H1 (cell line): ENCODE measurements at regions of chr19 and their contacts with region 1.

Region 1: DNA sequence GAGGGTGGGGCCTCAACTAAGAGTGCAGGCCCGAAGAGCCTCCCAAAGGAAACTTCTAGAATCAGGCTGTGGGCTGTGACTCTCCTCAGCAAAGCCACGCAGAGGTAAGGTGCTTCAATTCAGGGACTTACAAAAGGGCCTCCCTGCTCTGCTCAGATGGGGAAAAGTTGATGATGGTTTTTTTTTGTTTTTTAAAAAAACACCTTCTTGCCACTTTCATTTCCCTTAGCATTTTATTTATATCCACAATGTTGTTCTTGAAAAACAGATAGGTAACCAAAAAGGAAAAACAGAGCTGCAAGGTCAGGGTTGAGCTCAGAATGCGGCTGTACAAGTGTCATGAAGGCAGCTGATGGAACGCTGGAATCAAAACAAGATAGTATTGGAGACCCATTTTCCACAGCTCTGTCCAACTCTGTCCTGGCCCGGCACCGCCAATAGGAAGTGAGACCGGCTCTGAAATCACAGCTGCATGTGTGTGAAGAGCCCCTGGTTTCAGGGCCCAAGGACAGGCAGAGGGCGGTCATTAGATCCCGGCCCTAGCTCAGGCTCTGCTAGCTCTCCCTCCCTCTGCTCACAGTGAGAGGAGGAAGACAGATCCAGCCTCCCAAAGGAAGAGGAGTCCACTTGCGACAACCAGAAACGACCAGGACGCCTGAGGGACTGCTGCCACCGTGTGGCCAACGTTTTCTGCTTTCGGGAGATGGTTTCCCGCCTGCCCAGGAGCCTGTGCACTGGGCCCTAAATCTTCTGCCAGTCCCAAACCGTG is 58.3 kb downstream of the KLF2 start:
- DNase-seq: peak; percentile 61 to 91
- H3K4me3 ChIP-seq: no peak overlapping the region
- H3K27ac ChIP-seq: no peak overlapping the region
- H3K4me1 ChIP-seq: no peaks in the 10 kb centered on the region
- H3K27me3 ChIP-seq: no peaks in the 10 kb centered on the region
- CTCF ChIP-seq: peak; percentile 87 to 93 (median 92)
- EP300 ChIP-seq: no peak
- POLR2A ChIP-seq: no peak
- RAD21 ChIP-seq: peak; percentile 97

Region 2: DNA sequence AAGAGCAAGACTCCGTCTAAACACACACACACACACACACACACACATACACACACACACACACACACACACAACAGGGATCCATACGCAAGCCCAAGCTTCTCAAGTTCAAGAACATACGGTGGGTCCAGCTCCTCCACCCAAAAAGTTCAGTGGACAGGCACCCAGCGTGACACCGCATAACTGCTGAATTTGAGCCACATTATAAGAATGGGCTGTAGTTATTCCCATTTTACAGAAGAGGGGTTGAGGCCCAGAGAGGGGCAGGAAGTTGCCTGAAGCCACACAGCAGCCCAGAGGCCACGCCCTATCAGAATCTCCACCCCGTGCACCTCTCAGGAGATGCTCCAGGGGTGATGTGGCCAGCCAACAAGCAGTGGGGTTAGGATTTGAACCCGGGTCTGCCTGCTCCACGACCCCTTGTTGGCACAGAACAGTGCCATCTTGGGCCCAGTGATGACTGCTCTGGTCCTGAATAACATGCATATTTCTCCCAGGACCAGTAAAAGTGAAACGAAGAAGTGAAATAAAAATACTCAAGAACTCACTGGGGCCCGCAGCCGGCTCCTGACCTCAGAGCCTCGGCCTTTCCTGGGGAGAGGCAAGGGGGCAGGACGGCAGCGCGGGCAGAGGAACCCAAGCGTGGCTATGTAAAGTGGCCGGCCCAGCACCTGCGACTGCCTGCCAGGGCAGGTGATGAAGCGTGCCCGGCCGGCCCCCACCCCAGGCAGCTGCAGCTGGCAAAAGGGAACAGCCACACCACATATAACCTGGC is 123.4 kb before region 1 on chr19:
- CTCF ChIA-PET with region 1: interaction called, 13 read pairs
- POLR2A ChIA-PET with region 1: no interaction called
- DNase-seq: no peak
- H3K4me3 ChIP-seq: no peak overlapping the region
- H3K27ac ChIP-seq: no peak overlapping the region
- H3K4me1 ChIP-seq: no peaks in the 10 kb centered on the region; a peak in 1 of 7 replicates
- H3K27me3 ChIP-seq: no peaks in the 10 kb centered on the region
- CTCF ChIP-seq: no peak
- EP300 ChIP-seq: no peak
- POLR2A ChIP-seq: no peak
- RAD21 ChIP-seq: no peak

Region 3: GRCh38 chr19:16330368-16330801 is 52.6 kb before region 1 on chr19:
- CTCF ChIA-PET with region 1: interaction called, 10 read pairs
- POLR2A ChIA-PET with region 1: no interaction called
- DNase-seq: no peak
- H3K4me3 ChIP-seq: no peak overlapping the region
- H3K27ac ChIP-seq: no peak overlapping the region
- H3K4me1 ChIP-seq: peaks cover 0 to 2% (median 0%) of the 10 kb centered on the region in 4 experiments; a peak in 2 of 7 replicates
- H3K27me3 ChIP-seq: peaks cover 17 to 42% (median 38%) of the 10 kb centered on the region in 4 experiments
- CTCF ChIP-seq: no peak
- EP300 ChIP-seq: no peak
- POLR2A ChIP-seq: no peak
- RAD21 ChIP-seq: no peak

Region 4: GRCh38 chr19:16363133-16363851 is 19.7 kb before region 1 on chr19:
- CTCF ChIA-PET with region 1: interaction called, 37 read pairs
- POLR2A ChIA-PET with region 1: interaction called, 4 read pairs
- DNase-seq: no peak
- H3K4me3 ChIP-seq: no peak overlapping the region
- H3K27ac ChIP-seq: no peak overlapping the region
- H3K4me1 ChIP-seq: peaks cover 0 to 6% (median 1%) of the 10 kb centered on the region in 4 experiments; a peak in 3 of 7 replicates
- H3K27me3 ChIP-seq: no peaks in the 10 kb centered on the region
- CTCF ChIP-seq: no peak
- EP300 ChIP-seq: no peak
- POLR2A ChIP-seq: no peak
- RAD21 ChIP-seq: no peak

Region 5: GRCh38 chr19:16371540-16371986 is 11.4 kb before region 1 on chr19:
- CTCF ChIA-PET with region 1: interaction called, 37 read pairs
- POLR2A ChIA-PET with region 1: interaction called, 4 read pairs
- DNase-seq: no peak
- H3K4me3 ChIP-seq: no peak overlapping the region
- H3K27ac ChIP-seq: no peak overlapping the region
- H3K4me1 ChIP-seq: peaks cover 0 to 4% (median 2%) of the 10 kb centered on the region in 4 experiments; a peak in 2 of 7 replicates
- H3K27me3 ChIP-seq: no peaks in the 10 kb centered on the region
- CTCF ChIP-seq: no peak
- EP300 ChIP-seq: no peak
- POLR2A ChIP-seq: no peak
- RAD21 ChIP-seq: no peak